ENCODE measurements at regions of chr2 and their contacts with region 1.

Region 1: DNA sequence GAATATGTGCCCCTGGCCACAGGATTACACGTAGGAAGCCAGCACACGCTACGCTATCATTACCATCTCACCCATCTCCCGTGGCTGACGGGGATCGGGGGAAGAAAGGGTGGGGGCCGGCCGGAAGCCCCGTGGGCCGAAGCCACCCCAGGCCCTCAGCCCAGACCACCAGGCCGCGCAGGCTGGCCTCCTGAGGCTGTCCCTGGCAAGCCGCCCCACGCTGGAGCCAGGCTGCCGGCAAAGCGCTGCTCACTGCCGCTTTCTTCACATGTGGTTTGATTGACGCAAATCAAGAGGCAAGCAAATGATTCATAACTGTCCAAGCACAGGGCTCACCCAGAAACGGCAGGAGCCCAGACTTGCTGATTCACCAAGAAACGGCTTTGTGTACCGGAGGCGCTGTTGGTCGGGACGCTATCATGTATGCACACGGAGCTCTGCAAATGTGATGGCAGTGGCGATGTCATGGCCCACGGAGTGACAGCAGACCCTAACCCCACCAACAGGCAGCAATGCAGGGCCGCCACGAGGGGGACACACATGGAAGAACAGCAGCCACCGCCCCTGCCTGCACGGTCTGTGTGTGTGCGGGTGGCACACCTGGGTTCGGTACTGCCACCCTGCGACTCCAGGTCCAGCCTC is 125.7 kb downstream of the HDAC4 start:
- DNase-seq: peak; percentile 65 to 94 (median 80)
- ATAC-seq: peak; percentile 86
- H3K4me3 ChIP-seq: peak overlapping the region; percentile 29 to 49
- H3K4me3 Mint-ChIP-seq: peak overlapping the region; percentile 66
- H3K27ac ChIP-seq: peak overlapping the region; percentile 50 to 67
- H3K27ac Mint-ChIP-seq: peak overlapping the region; percentile 92
- H3K4me1 ChIP-seq: peaks cover 38% of the 10 kb centered on the region
- H3K4me1 Mint-ChIP-seq: peaks cover 52% of the 10 kb centered on the region
- H3K27me3 ChIP-seq: no peaks in the 10 kb centered on the region
- H3K27me3 Mint-ChIP-seq: no peaks in the 10 kb centered on the region
- CTCF ChIP-seq: no peak

Region 2: GRCh38 chr2:239288951-239289511 is 13.9 kb after region 1 on chr2:
- CTCF ChIA-PET with region 1: interaction called, 4 read pairs
- POLR2A ChIA-PET with region 1: interaction called, 3 read pairs
- intact Hi-C with region 1: loop called in 1 of 2 experiments (anchors 1 kb)
- DNase-seq: peak in 5 of 9 experiments; percentile 39 to 86 (median 57)
- ATAC-seq: peak; percentile 69
- H3K4me3 ChIP-seq: peak overlapping the region; percentile 32 to 42
- H3K4me3 Mint-ChIP-seq: peak overlapping the region; percentile 74
- H3K27ac ChIP-seq: peak overlapping the region; percentile 80 to 87
- H3K27ac Mint-ChIP-seq: peak overlapping the region; percentile 98
- H3K4me1 ChIP-seq: peaks cover 76% of the 10 kb centered on the region
- H3K4me1 Mint-ChIP-seq: peaks cover 72% of the 10 kb centered on the region
- H3K27me3 ChIP-seq: no peaks in the 10 kb centered on the region
- H3K27me3 Mint-ChIP-seq: no peaks in the 10 kb centered on the region
- CTCF ChIP-seq: no peak

Region 3: DNA sequence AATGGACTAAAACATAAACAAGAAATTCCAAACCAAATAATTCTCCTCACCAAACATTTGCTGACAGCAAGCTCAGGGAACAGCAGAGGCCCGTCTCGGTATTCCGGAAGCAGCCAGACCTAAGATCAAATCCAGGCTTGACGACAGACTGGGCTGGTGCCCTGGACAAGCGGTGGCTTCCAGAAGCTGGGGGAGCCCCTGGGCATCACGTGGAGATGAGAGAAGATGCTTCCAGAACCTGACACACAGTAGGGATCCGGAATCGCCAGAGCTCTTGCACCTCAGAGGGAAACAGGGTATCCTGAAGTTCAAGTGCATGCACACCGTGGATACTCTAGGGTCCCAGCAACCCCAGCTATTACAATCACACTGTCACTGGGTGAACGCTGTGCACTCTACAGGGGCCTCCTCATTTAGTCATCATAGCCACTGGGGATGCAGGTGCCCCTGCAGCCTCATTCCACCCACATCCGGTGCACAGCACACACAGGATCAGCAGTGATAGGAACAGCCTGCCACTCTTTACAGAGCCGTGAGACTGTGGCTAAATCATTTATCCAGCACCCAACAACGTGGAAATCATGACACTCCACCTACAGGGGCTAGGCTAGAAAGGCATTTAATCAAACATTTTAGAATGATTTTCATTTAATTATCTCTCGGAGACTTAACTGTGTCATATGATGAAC is 23.1 kb after region 1 on chr2:
- CTCF ChIA-PET with region 1: interaction called, 3 read pairs
- POLR2A ChIA-PET with region 1: interaction called, 6 read pairs
- intact Hi-C with region 1: loop called in 1 of 2 experiments (anchors 1 kb)
- DNase-seq: peak; percentile 52 to 93 (median 76)
- ATAC-seq: peak; percentile 86
- H3K4me3 ChIP-seq: peak overlapping the region; percentile 34 to 53
- H3K4me3 Mint-ChIP-seq: peak overlapping the region; percentile 84
- H3K27ac ChIP-seq: peak overlapping the region; percentile 34 to 68
- H3K27ac Mint-ChIP-seq: peak overlapping the region; percentile 94
- H3K4me1 ChIP-seq: peaks cover 73% of the 10 kb centered on the region
- H3K4me1 Mint-ChIP-seq: peaks cover 71% of the 10 kb centered on the region
- H3K27me3 ChIP-seq: no peaks in the 10 kb centered on the region
- H3K27me3 Mint-ChIP-seq: no peaks in the 10 kb centered on the region
- CTCF ChIP-seq: peak; percentile 50

Region 4: DNA sequence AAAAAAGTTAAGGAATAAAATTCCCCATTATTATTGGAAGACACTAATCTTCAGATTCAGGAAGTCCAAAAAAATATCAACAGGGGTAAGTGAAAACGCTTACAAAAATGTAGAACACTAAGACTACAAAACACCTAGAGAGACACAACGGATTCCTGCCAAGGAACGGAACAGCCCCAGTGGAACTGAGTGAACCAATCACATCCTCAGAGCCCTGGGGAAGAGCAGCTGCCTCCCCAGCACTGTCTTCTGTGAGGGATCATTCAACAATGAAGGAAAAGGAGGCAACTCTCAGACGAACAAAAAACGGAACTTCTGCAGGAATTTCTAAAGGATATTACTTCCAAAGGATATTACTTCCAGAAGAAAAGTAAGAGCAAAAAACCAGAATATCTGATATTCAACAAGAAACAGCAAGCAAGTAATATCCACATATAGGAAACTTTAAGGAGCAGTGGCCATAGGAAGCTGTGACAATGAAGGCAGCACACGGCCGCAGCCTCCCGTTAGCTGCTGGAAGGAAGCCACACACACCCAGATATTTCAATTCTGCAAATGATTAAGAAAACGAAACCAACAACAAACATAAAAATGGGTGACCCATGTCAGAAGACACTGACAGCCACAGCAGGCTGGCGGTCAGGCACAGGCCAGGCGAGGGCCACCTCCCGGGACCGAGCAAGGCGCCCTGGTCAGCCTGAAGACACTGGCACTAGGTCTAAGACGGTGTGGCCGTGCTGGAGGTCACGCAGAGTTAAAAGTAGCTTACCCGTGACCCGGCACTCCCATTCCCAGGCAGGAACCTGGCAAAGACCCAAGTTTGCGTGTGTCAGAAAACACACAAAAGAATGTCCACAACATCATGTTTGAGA is 43.9 kb after region 1 on chr2:
- CTCF ChIA-PET with region 1: no interaction called
- POLR2A ChIA-PET with region 1: no interaction called
- intact Hi-C with region 1: no loop called
- DNase-seq: peak in 2 of 9 experiments; percentile 32 to 59
- ATAC-seq: no peak
- H3K4me3 ChIP-seq: peak overlapping the region; percentile 27 to 42
- H3K4me3 Mint-ChIP-seq: peak overlapping the region; percentile 74
- H3K27ac ChIP-seq: peak overlapping the region; percentile 65 to 74
- H3K27ac Mint-ChIP-seq: peak overlapping the region; percentile 93
- H3K4me1 ChIP-seq: peaks cover 57% of the 10 kb centered on the region
- H3K4me1 Mint-ChIP-seq: peaks cover 54% of the 10 kb centered on the region
- H3K27me3 ChIP-seq: no peaks in the 10 kb centered on the region
- H3K27me3 Mint-ChIP-seq: no peaks in the 10 kb centered on the region
- CTCF ChIP-seq: no peak

Region 5: GRCh38 chr2:239927424-239927981 is 652.3 kb after region 1 on chr2:
- CTCF ChIA-PET with region 1: no interaction called
- POLR2A ChIA-PET with region 1: no interaction called
- intact Hi-C with region 1: loop called in 1 of 2 experiments (anchors 2 kb)
- DNase-seq: peak; percentile 19 to 80 (median 55)
- ATAC-seq: peak; percentile 97
- H3K4me3 ChIP-seq: peak overlapping the region; percentile 28 to 34
- H3K4me3 Mint-ChIP-seq: peak overlapping the region; percentile 75
- H3K27ac ChIP-seq: no peak overlapping the region
- H3K27ac Mint-ChIP-seq: peak overlapping the region; percentile 45
- H3K4me1 ChIP-seq: no peaks in the 10 kb centered on the region
- H3K4me1 Mint-ChIP-seq: peaks cover 12% of the 10 kb centered on the region
- H3K27me3 ChIP-seq: peaks cover 0 to 4% of the 10 kb centered on the region in 2 experiments
- H3K27me3 Mint-ChIP-seq: peaks cover 3% of the 10 kb centered on the region
- CTCF ChIP-seq: no peak